Right ventricle myocardium superior (tissue), 1 donor: ENCODE measurements at regions of chr15 and their contacts with region 1.

Region 1: GRCh38 chr15:67150028-67150860 is 84.8 kb downstream of the SMAD3 start:
- DNase-seq: peak; percentile 72
- ATAC-seq: peak; percentile 74

Region 2: GRCh38 chr15:67199881-67200763 is 49.9 kb after region 1 on chr15:
- intact Hi-C with region 1: loop called (anchors 10 kb)
- DNase-seq: no peak
- ATAC-seq: peak; percentile 48

Region 3: DNA sequence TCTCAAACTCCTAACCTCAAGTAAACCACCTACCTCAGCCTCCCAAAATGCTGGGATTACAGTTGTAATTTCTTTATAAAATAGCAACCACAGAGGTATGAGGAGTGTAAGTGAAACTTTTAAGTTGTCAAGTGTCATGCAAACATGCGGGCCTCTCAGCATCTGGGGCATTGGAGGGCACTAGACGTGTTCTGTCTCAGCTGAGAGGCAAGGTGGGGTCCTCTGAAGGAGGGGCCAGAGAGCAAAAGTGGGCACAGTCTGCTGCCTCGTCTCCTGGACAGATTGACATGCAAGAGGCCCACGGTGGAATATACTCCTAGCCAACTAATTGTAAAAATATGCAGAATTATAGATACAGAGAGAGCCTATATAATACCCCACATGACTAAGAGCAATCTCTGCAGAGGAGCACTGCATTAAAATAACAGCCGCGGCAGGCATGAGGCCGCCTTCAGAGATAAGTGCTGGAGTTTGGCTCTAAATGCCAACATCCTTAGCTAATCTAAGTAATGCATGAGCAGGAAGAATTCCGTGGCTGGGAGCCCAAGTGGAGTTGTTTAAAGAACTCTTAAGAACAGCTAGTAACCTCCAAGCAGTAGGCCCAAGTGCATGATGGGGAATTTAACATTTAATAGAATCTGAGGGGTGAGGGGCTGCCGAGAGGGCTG is 777.4 kb after region 1 on chr15:
- intact Hi-C with region 1: no loop called
- DNase-seq: peak; percentile 82
- ATAC-seq: peak; percentile 79